OCI-LY7 (cell line): ENCODE measurements at regions of chr4 and their contacts with region 1.

Region 1: DNA sequence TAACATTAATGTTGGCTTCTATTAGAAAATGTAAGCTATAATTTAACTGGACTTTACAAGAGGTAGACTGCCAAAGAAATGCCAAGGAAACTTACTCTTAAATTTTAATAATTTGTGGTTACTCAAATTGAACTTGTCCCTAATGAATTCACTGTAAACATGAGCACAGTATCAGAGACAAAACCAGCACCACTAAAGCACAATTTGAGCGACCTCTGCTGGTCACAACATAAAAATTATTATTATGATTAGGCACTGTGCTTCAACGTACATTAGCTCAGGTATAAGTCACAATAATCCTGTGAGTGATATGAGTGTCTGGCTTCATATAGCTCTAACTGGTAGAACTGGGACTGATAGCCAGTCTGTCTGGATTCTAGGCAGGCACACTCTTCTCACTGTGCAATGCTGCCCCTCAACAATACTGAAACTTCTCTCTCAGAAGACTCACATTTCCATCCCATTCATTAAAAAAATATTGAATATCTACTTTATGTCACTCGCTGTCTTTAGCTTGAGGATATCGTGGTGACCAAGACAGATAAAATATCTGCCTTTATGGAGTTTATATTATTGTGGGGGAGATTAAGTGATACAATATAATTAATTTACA is 8.0 kb downstream of the NUDT6 start:
- DNase-seq: peak; percentile 65
- H3K4me3 ChIP-seq: no peak overlapping the region
- H3K27ac ChIP-seq: no peak overlapping the region
- H3K4me1 ChIP-seq: no peaks in the 10 kb centered on the region
- CTCF ChIP-seq: peak; percentile 88

Region 2: GRCh38 chr4:122602277-122603142 is 311.9 kb before region 1 on chr4:
- CTCF ChIA-PET with region 1: no interaction called
- POLR2A ChIA-PET with region 1: no interaction called
- intact Hi-C with region 1: loop called (anchors 5 kb)
- DNase-seq: no peak
- H3K4me3 ChIP-seq: no peak overlapping the region
- H3K27ac ChIP-seq: no peak overlapping the region
- H3K4me1 ChIP-seq: no peaks in the 10 kb centered on the region
- CTCF ChIP-seq: peak; percentile 51; the same call in 1 of the 2 replicates

Region 3: DNA sequence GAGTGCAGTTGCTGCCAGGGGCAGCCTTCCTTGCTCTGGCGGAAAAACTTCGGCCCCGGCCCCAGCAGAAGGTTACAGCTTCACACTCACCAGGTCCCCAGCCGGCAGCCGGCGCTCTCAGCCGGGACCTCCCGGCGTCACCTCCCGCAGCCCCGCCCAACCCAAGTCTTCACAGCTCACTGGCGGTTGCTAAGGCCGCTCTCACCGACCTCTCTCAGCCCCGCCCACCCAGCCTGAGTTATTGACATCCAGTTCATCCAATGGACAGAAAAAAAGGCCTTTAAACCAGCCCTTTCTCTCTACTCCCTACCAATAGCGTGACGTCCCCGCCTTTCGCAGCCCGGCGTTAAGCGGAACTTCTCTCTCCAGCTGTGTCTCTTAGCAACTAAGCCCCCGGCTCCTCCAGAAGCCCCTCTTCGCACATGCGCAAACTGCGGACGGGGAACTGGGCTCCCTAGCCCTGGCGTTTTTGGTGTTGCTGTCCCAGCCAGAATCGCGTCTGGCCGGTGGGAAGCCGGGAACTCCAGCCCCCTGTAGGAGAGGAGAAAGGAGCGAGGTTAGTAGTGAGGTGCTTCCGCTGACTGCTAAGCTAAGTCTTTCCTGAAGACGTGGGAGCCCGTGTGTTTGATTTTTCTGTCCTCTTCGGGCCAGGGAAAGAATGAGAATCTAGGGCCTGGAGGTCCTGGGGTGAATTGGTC is 181.9 kb before region 1 on chr4 and contains the start of gene BBS12:
- CTCF ChIA-PET with region 1: interaction called, 4 read pairs
- POLR2A ChIA-PET with region 1: no interaction called
- intact Hi-C with region 1: loop called (anchors 1 kb)
- DNase-seq: peak; percentile 99
- H3K4me3 ChIP-seq: peak within 1 kb of the TSS; percentile 79
- H3K27ac ChIP-seq: no peak within 1 kb of the TSS
- H3K4me1 ChIP-seq: peaks cover 7% of the 10 kb centered on the region
- CTCF ChIP-seq: peak; percentile 66
- total RNA-seq, gene BBS12: 1.7 and 1.8 TPM in 2 replicates

Region 4: DNA sequence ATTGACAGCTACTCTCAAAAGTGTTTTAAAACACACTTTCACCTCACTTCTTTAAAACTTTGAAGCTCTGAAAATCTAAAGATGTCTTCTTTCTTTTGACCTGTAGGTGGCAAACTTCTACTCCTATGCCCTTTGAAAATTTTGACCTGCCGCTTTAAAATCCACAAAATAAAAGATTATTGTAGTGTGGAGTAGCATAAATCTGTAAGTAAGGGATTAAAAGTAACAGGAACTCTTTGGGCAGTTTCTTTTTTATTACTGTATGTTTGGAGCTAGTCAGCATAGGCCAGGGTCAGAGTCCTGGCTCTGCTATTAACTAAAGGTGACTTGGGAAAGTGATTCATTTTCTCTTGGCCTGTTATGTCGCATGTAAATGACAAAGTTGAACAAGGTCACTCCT is 156.4 kb before region 1 on chr4:
- CTCF ChIA-PET with region 1: interaction called, 3 read pairs
- POLR2A ChIA-PET with region 1: interaction called, 3 read pairs
- intact Hi-C with region 1: loop called (anchors 1 kb)
- DNase-seq: peak; percentile 29
- H3K4me3 ChIP-seq: no peak overlapping the region
- H3K27ac ChIP-seq: no peak overlapping the region
- H3K4me1 ChIP-seq: no peaks in the 10 kb centered on the region
- CTCF ChIP-seq: peak; percentile 96